ENCODE measurements at regions of chr15 and their contacts with region 1.

Region 1: GRCh38 chr15:64513823-64514222 is 53.4 kb downstream of the ZNF609 start:
- DNase-seq: no peak
- H3K4me3 Mint-ChIP-seq: no peak overlapping the region
- H3K27ac Mint-ChIP-seq: peak overlapping the region; percentile 39
- H3K4me1 Mint-ChIP-seq: peaks cover 72% of the 10 kb centered on the region
- H3K27me3 Mint-ChIP-seq: no peaks in the 10 kb centered on the region

Region 2: DNA sequence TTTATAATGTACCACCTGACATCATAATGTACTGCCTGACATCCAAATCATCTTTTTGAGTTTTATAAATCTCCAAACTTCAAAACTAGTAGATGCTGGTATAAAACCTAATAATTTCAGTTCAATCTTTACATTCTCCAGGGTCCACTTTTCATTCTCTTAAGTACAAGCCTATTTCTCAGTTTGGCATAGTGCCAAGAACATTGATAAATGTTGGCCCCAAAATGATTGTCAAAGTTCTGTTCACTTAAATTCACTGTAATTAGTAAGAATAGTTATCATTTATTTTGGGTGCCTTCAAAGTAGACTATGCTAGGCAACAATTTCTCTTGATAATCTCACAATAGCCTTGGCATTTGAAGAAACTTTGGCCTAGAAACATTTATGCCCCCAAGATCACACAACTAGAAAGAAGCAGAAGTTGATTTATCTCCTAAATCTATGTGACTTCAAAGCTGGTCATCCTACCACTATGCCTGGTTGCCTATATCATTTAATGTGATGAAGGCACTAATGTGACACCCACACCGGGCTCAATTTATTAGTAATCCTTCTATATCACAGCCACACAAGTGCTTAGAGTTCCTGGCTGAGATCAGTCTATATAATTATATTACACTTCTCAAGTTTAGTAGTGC is 48.3 kb after region 1 on chr15:
- CTCF ChIA-PET with region 1: interaction called, 7 read pairs
- intact Hi-C with region 1: loop called (anchors 5 kb)
- DNase-seq: no peak
- H3K4me3 Mint-ChIP-seq: no peak overlapping the region
- H3K27ac Mint-ChIP-seq: peak overlapping the region; percentile 28
- H3K4me1 Mint-ChIP-seq: peaks cover 62% of the 10 kb centered on the region
- H3K27me3 Mint-ChIP-seq: no peaks in the 10 kb centered on the region

Region 3: DNA sequence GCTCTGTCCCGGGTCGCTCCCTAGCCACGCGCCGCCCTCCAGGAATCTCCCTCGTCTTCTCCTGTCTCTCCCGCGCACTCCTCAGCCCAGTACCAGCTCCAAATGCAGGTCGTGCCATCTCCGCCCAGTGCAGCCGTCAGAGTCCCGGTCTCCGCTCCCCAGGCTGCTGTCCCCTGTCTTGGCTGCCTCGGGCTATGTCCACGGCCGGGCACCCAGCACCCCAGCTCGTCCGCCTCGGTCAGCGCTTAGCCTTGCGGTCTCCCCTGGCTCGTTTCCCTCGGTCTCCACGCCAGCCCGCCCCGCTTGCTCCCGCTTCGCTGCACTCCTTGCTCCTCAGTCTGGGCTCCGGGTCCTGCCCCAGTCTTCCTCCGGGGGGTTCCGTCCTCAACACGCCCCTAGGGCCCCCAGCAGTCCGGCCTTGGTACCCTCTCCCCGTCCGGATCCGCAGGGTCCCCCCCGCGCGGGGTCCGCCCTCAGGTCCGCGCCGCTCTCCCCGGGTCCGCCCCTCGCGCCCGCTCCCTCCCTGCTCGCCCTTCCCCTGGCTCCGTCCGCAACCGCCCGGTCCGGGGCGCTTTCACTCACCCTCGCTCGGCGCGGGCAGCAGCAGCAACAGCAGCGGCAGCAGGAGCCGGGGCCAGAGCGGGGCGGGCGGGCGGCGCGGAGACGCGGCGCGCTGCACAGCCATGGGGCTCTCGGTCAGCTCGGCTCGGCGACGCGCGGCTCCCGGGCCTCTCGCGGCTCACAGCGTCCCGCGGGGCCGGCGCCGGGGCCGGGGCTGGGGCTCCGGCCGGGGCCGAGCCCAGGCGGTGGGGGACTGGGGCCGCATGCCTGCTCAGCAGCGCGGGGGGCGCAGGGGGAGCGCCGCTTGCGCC is 863.5 kb after region 1 on chr15:
- CTCF ChIA-PET with region 1: no interaction called
- intact Hi-C with region 1: no loop called
- DNase-seq: no peak
- H3K4me3 Mint-ChIP-seq: peak overlapping the region; percentile 73
- H3K27ac Mint-ChIP-seq: no peak overlapping the region
- H3K4me1 Mint-ChIP-seq: peaks cover 11% of the 10 kb centered on the region
- H3K27me3 Mint-ChIP-seq: peaks cover 51% of the 10 kb centered on the region